Naive thymus-derived CD4-positive, alpha-beta T cell (primary cell): ENCODE measurements at regions of chr11 and their contacts with region 1.

Region 1: DNA sequence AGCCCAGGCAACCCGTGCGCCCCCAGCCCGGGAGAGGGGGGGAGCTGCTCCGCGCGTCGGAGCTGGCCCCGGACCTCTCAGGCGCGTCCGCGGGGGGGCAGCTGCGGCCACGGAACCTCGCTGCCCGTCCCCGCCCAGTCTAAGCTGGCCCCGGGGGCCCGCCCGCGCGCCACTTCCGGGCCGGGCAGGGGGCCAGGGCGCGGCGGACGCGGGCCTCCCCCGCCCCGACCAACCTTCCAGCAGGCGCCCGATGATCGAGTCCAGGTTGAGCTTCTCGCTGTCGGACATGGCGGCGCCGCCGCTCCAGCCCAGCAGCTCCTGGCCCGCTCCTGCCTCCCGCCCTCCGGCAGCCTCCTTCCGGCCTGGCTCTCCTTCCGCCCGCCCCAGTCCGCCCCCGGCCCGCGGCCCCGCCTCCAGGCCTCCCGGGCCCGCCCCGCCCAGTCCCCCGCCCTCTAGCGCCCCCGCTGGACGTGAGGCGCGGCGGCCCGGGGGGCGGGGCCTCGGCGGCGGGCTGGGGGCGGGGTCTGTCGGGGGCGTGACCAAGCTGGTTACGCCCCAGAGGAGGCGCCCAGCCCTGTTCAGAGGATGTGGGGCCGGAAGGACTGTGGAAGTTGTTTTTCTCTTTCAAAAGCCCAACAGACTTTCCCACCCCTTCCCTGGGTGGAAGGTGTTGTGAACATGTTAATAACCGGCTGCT is at the start of gene PPP1CA:
- DNase-seq: peak; percentile 87 to 99 (median 92)
- ATAC-seq: peak; percentile 93
- H3K4me3 ChIP-seq: peak within 1 kb of the TSS; percentile 98
- H3K4me3 Mint-ChIP-seq: peak within 1 kb of the TSS; percentile 90 to 100 (median 96)
- H3K27ac ChIP-seq: peak within 1 kb of the TSS; percentile 87
- H3K27ac Mint-ChIP-seq: peak within 1 kb of the TSS; percentile 81 to 97 (median 95)
- H3K4me1 ChIP-seq: peaks cover 55 to 63% of the 10 kb centered on the region in 2 donors
- H3K4me1 Mint-ChIP-seq: peaks cover 22 to 59% (median 52%) of the 10 kb centered on the region in 7 donors
- H3K27me3 ChIP-seq: no peaks in the 10 kb centered on the region
- H3K27me3 Mint-ChIP-seq: no peaks in the 10 kb centered on the region
- total RNA-seq, gene PPP1CA: 83.0 to 339 (median 122) TPM

Region 2: GRCh38 chr11:67265633-67266423 is 135.8 kb before region 1 on chr11:
- CTCF ChIA-PET with region 1: no interaction called
- POLR2A ChIA-PET with region 1: interaction called, 8 read pairs
- intact Hi-C with region 1: loop called in 1 of 2 experiments (anchors 5 kb)
- DNase-seq: peak; percentile 50 to 91 (median 78)
- ATAC-seq: peak; percentile 76
- H3K4me3 ChIP-seq: peak overlapping the region; percentile 25
- H3K4me3 Mint-ChIP-seq: peak overlapping the region; percentile 75 to 99 (median 84)
- H3K27ac ChIP-seq: peak overlapping the region; percentile 65
- H3K27ac Mint-ChIP-seq: peak overlapping the region; percentile 72 to 94 (median 81)
- H3K4me1 ChIP-seq: peaks cover 42 to 56% of the 10 kb centered on the region in 2 donors
- H3K4me1 Mint-ChIP-seq: peaks cover 22 to 77% (median 65%) of the 10 kb centered on the region in 7 donors
- H3K27me3 ChIP-seq: no peaks in the 10 kb centered on the region
- H3K27me3 Mint-ChIP-seq: no peaks in the 10 kb centered on the region

Region 3: GRCh38 chr11:67420646-67421420 is 19.2 kb after region 1 on chr11:
- CTCF ChIA-PET with region 1: interaction called, 67 read pairs
- POLR2A ChIA-PET with region 1: interaction called, 1,530 read pairs
- intact Hi-C with region 1: loop called (anchors 1 kb)
- DNase-seq: peak; percentile 97 to 100 (median 97)
- ATAC-seq: peak; percentile 96
- H3K4me3 ChIP-seq: peak overlapping the region; percentile 56
- H3K4me3 Mint-ChIP-seq: peak overlapping the region; percentile 74 to 92 (median 82)
- H3K27ac ChIP-seq: peak overlapping the region; percentile 77
- H3K27ac Mint-ChIP-seq: peak overlapping the region; percentile 69 to 98 (median 92)
- H3K4me1 ChIP-seq: peaks cover 42 to 49% of the 10 kb centered on the region in 2 donors
- H3K4me1 Mint-ChIP-seq: peaks cover 24 to 60% (median 53%) of the 10 kb centered on the region in 7 donors
- H3K27me3 ChIP-seq: no peaks in the 10 kb centered on the region
- H3K27me3 Mint-ChIP-seq: peaks cover 0 to 15% (median 0%) of the 10 kb centered on the region in 5 donors

Region 4: DNA sequence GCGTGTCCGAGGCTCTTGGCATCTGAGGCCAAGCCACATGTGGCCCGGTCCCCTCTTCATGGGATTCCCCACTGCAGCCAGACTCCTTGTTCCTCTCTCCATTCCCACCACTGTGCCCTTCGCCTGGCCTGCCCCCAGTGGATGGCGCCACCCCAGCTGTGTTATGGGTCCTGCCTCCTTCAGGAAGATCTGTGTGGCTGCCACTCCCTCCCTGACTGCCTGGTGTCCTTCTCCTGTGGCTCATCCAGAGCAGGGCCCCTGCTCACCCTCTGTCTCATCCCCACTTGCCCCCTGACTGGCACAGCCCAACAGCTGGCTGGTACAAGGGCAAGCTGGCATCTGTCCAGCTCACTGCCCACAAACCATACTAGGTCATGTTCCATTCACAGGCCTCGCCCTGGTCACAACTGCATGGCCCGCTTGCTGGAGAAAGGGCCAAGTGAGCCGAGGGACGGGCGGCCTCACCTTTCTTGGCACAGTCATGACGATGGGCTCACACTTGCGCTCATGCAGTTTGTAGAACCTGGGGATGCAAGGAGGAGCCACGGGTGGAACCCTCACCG is 37.8 kb after region 1 on chr11:
- CTCF ChIA-PET with region 1: interaction called, 37 read pairs
- POLR2A ChIA-PET with region 1: interaction called, 1,530 read pairs
- intact Hi-C with region 1: loop called (anchors 1 kb)
- DNase-seq: peak in 1 of 9 donors; percentile 55
- ATAC-seq: no peak
- H3K4me3 ChIP-seq: peak overlapping the region; percentile 100
- H3K4me3 Mint-ChIP-seq: peak overlapping the region; percentile 85 to 99 (median 97)
- H3K27ac ChIP-seq: peak overlapping the region; percentile 85
- H3K27ac Mint-ChIP-seq: peak overlapping the region; percentile 90 to 97 (median 95)
- H3K4me1 ChIP-seq: peaks cover 38 to 64% of the 10 kb centered on the region in 2 donors
- H3K4me1 Mint-ChIP-seq: peaks cover 40 to 74% (median 55%) of the 10 kb centered on the region in 7 donors
- H3K27me3 ChIP-seq: no peaks in the 10 kb centered on the region
- H3K27me3 Mint-ChIP-seq: no peaks in the 10 kb centered on the region

Region 5: GRCh38 chr11:67468835-67469811 is 67.5 kb after region 1 on chr11 and contains the start of gene TMEM134:
- CTCF ChIA-PET with region 1: interaction called, 8 read pairs
- POLR2A ChIA-PET with region 1: interaction called, 154 read pairs
- intact Hi-C with region 1: loop called (anchors 1 kb)
- DNase-seq: peak; percentile 82 to 95 (median 89)
- ATAC-seq: peak; percentile 92
- H3K4me3 ChIP-seq: peak within 1 kb of the TSS; percentile 74
- H3K4me3 Mint-ChIP-seq: peak within 1 kb of the TSS; percentile 87 to 95 (median 90)
- H3K27ac ChIP-seq: peak within 1 kb of the TSS; percentile 94
- H3K27ac Mint-ChIP-seq: peak within 1 kb of the TSS; percentile 79 to 97 (median 88)
- H3K4me1 ChIP-seq: peaks cover 17 to 37% of the 10 kb centered on the region in 2 donors
- H3K4me1 Mint-ChIP-seq: peaks cover 23 to 42% (median 29%) of the 10 kb centered on the region in 7 donors
- H3K27me3 ChIP-seq: no peaks in the 10 kb centered on the region
- H3K27me3 Mint-ChIP-seq: peaks cover 0 to 6% (median 0%) of the 10 kb centered on the region in 5 donors
- total RNA-seq, gene TMEM134: 52.4 to 94.6 (median 70.6) TPM

Region 6: DNA sequence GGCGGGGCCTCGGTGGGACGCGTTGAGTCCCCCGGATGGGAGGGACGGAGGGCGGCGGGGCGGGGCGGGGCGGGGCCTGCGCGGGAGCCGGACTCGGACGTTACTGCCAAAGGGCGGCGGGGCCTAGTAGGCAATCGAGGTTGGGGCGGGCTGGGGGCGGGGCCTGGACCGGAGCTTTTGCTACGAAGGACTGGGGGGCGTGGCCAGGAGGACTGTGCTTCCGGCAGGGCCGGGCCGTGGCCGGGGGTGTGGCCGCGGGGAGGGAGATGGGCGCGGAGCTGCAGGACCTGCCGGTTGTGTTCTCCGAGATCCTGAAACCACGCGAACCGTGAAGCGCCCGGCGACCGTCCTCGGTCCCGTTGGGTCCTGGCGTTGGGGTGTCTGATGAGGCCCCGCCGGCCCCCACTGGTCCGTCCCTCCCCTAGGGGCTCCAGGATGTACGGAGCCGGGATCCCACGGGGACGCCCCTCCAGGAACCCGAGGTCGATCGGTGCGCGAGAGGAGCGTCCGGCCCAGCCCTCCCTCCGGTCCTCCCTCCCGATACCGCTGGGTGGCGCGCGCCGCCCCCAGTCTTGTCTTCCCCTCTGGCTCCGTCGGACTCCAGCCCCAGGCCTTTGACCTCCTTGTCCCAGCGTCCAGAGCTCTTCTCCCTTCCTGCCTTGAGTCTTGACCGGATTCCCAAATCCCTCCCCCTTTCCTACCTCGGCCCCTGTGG is 228.7 kb after region 1 on chr11:
- CTCF ChIA-PET with region 1: interaction called, 3 read pairs
- POLR2A ChIA-PET with region 1: no interaction called
- intact Hi-C with region 1: loop called in 1 of 2 experiments (anchors 5 kb)
- DNase-seq: peak in 8 of 9 donors; percentile 40 to 97 (median 86)
- ATAC-seq: peak; percentile 87
- H3K4me3 ChIP-seq: peak overlapping the region; percentile 84
- H3K4me3 Mint-ChIP-seq: peak overlapping the region; percentile 84 to 94 (median 89)
- H3K27ac ChIP-seq: peak overlapping the region; percentile 85
- H3K27ac Mint-ChIP-seq: peak overlapping the region; percentile 74 to 96 (median 89)
- H3K4me1 ChIP-seq: peaks cover 8 to 9% of the 10 kb centered on the region in 2 donors
- H3K4me1 Mint-ChIP-seq: peaks cover 5 to 15% (median 7%) of the 10 kb centered on the region in 7 donors
- H3K27me3 ChIP-seq: no peaks in the 10 kb centered on the region
- H3K27me3 Mint-ChIP-seq: no peaks in the 10 kb centered on the region